Naive thymus-derived CD4-positive, alpha-beta T cell (primary cell): ENCODE measurements at regions of chr7 and their contacts with region 1.

Region 1: DNA sequence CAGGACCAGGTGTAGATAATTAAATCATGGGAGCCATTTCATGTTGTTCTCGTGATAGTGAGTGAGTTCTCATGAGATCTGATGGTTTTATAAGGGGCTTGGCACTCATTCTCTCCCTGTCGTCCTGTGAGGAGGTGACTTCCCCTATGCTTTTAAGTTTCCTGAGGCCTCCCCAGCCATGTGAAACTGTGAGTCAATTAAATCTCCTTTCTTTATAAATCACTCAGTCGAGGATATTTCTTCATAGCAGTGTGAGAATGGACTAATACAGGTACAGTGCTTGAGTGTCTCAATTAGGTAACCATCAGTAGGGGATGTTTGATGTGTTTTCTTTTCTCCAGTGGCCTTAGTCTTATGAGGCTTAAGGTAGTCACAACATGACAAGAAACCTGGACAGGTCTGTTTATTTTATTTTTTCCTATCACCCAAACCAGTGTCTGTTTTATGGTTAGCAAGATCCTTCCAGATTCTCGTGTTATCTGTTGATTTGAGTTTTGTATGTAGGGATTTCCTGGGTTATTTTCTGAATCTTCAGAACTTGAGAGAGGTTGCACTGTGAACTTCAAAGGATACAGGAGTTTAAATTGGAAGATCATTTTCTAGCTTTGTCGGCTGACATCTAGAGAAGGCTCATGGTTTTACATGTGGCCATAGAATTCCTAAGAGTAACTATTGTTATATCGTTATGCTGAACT is 32.1 kb downstream of the UMAD1 start:
- DNase-seq: no peak
- ATAC-seq: no peak
- H3K4me3 ChIP-seq: no peak overlapping the region
- H3K4me3 Mint-ChIP-seq: peak overlapping the region in 9 of 10 donors; percentile 40 to 74 (median 65)
- H3K27ac ChIP-seq: peak overlapping the region; percentile 55
- H3K27ac Mint-ChIP-seq: peak overlapping the region; percentile 30 to 90 (median 79)
- H3K4me1 ChIP-seq: no peaks in the 10 kb centered on the region
- H3K4me1 Mint-ChIP-seq: peaks cover 21 to 68% (median 59%) of the 10 kb centered on the region in 7 donors
- H3K27me3 ChIP-seq: no peaks in the 10 kb centered on the region
- H3K27me3 Mint-ChIP-seq: no peaks in the 10 kb centered on the region

Region 2: GRCh38 chr7:7617550-7617949 is 55.1 kb before region 1 on chr7:
- CTCF ChIA-PET with region 1: no interaction called
- POLR2A ChIA-PET with region 1: no interaction called
- intact Hi-C with region 1: loop called in 1 of 2 experiments (anchors 5 kb)
- DNase-seq: no peak
- ATAC-seq: no peak
- H3K4me3 ChIP-seq: no peak overlapping the region
- H3K4me3 Mint-ChIP-seq: peak overlapping the region in 2 of 10 donors; percentile 9 to 12
- H3K27ac ChIP-seq: no peak overlapping the region
- H3K27ac Mint-ChIP-seq: peak overlapping the region in 2 of 9 donors; percentile 47 to 49
- H3K4me1 ChIP-seq: no peaks in the 10 kb centered on the region
- H3K4me1 Mint-ChIP-seq: peaks cover 0 to 24% (median 13%) of the 10 kb centered on the region in 7 donors
- H3K27me3 ChIP-seq: no peaks in the 10 kb centered on the region
- H3K27me3 Mint-ChIP-seq: peaks cover 0 to 5% (median 0%) of the 10 kb centered on the region in 5 donors

Region 3: DNA sequence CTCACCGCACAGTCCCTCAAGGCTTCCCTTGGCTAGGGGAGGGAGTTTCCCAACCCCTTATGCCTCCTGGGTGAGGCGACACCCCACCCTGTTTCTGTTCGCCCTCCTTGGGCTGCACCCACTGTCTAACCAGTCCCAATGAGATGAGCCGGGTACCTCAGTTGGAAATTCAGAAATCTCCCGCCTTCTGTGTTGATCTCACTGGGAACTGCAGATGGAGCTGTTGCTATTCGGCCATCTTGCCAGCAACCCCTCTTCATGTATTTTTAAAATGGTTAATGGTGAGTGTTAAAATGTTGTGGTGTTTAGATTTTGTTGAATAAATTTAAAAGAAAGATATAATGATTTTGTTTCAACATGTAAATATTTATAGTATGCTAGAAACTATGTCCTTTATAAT is 10.2 kb before region 1 on chr7:
- CTCF ChIA-PET with region 1: no interaction called
- POLR2A ChIA-PET with region 1: no interaction called
- intact Hi-C with region 1: loop called in 1 of 2 experiments (anchors 1 kb)
- DNase-seq: no peak
- ATAC-seq: no peak
- H3K4me3 ChIP-seq: no peak overlapping the region
- H3K4me3 Mint-ChIP-seq: no peak overlapping the region
- H3K27ac ChIP-seq: no peak overlapping the region
- H3K27ac Mint-ChIP-seq: no peak overlapping the region
- H3K4me1 ChIP-seq: no peaks in the 10 kb centered on the region
- H3K4me1 Mint-ChIP-seq: peaks cover 6 to 60% (median 53%) of the 10 kb centered on the region in 7 donors
- H3K27me3 ChIP-seq: no peaks in the 10 kb centered on the region
- H3K27me3 Mint-ChIP-seq: no peaks in the 10 kb centered on the region